AG04450 (cell line): ENCODE measurements at regions of chr9 and their contacts with region 1.

Region 1: GRCh38 chr9:122464633-122465567 is 12.8 kb downstream of the OR1J1 start:
- DNase-seq: peak; percentile 74
- H3K4me3 ChIP-seq: peak overlapping the region; percentile 55
- H3K27ac ChIP-seq: no peak overlapping the region
- H3K27me3 ChIP-seq: no peaks in the 10 kb centered on the region
- CTCF ChIP-seq: peak; percentile 88

Region 2: GRCh38 chr9:122302237-122303093 is 162.4 kb before region 1 on chr9:
- CTCF ChIA-PET with region 1: no interaction called
- POLR2A ChIA-PET with region 1: no interaction called
- DNase-seq: no peak
- H3K4me3 ChIP-seq: no peak overlapping the region
- H3K27ac ChIP-seq: no peak overlapping the region
- H3K27me3 ChIP-seq: no peaks in the 10 kb centered on the region
- CTCF ChIP-seq: no peak

Region 3: DNA sequence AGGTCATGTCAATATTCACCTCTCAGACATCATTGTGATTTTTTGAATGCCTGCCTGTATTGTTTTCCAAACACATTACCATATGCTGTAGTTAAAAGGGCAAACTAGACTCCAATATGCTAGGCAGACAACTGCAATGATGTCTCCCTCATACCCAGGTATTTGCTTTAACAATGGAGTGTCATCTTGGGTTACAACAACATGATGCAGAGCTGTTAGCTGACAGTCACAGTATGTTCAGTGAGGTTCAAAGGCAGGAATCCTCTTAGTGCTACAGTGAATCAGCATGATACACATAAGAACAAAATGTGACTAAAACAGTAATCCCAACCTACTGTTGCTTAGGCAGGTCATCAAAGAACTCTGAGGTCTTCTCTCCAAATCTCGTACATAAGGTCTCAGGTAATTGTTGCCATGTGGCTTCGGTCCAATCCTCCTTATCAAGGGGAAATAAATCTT is 11.2 kb before region 1 on chr9:
- CTCF ChIA-PET with region 1: interaction called, 24 read pairs
- POLR2A ChIA-PET with region 1: no interaction called
- DNase-seq: no peak
- H3K4me3 ChIP-seq: no peak overlapping the region
- H3K27ac ChIP-seq: no peak overlapping the region
- H3K27me3 ChIP-seq: no peaks in the 10 kb centered on the region
- CTCF ChIP-seq: no peak

Region 4: GRCh38 chr9:122518226-122518625 is 53.3 kb after region 1 on chr9:
- CTCF ChIA-PET with region 1: no interaction called
- POLR2A ChIA-PET with region 1: no interaction called
- DNase-seq: no peak
- H3K4me3 ChIP-seq: no peak overlapping the region
- H3K27ac ChIP-seq: no peak overlapping the region
- H3K27me3 ChIP-seq: no peaks in the 10 kb centered on the region
- CTCF ChIP-seq: no peak

Region 5: DNA sequence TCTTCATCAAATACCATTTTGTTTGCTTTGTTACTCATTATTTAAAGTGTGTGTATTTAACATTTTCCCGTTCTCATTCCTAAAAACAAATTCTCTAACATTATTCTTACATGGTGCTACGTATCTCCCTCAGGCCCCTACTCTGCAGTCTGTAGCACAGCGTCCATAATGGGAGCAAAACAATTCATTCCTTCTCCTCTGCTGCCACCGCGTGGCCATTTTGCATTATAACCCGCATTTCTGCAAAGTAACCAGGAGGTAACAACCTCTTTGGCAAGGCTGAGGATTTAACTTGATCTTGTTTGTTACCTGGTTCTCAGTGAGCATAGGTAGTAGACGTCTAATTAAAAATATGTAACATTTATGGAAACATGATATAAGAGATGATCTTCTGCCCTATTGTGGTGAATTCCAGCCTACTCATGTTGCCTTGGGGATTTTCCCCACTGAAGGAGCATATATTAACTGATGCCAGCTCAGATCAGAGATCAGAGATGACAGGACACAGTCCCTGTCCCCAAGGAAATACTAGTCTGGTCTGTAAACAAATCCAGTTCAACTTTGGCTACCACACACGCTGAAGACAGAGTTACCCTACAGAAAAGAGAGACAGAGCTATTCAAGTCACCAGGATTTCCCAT is 345.5 kb after region 1 on chr9:
- CTCF ChIA-PET with region 1: interaction called, 104 read pairs
- POLR2A ChIA-PET with region 1: no interaction called
- DNase-seq: peak; percentile 59
- H3K4me3 ChIP-seq: no peak overlapping the region
- H3K27ac ChIP-seq: no peak overlapping the region
- H3K27me3 ChIP-seq: no peaks in the 10 kb centered on the region
- CTCF ChIP-seq: peak; percentile 68

Region 6: GRCh38 chr9:122816163-122816867 is 351.4 kb after region 1 on chr9:
- CTCF ChIA-PET with region 1: interaction called, 104 read pairs
- POLR2A ChIA-PET with region 1: no interaction called
- DNase-seq: no peak
- H3K4me3 ChIP-seq: no peak overlapping the region
- H3K27ac ChIP-seq: no peak overlapping the region
- H3K27me3 ChIP-seq: no peaks in the 10 kb centered on the region
- CTCF ChIP-seq: no peak